Panc1 (cell line): ENCODE measurements at regions of chr1 and their contacts with region 1.

Region 1: DNA sequence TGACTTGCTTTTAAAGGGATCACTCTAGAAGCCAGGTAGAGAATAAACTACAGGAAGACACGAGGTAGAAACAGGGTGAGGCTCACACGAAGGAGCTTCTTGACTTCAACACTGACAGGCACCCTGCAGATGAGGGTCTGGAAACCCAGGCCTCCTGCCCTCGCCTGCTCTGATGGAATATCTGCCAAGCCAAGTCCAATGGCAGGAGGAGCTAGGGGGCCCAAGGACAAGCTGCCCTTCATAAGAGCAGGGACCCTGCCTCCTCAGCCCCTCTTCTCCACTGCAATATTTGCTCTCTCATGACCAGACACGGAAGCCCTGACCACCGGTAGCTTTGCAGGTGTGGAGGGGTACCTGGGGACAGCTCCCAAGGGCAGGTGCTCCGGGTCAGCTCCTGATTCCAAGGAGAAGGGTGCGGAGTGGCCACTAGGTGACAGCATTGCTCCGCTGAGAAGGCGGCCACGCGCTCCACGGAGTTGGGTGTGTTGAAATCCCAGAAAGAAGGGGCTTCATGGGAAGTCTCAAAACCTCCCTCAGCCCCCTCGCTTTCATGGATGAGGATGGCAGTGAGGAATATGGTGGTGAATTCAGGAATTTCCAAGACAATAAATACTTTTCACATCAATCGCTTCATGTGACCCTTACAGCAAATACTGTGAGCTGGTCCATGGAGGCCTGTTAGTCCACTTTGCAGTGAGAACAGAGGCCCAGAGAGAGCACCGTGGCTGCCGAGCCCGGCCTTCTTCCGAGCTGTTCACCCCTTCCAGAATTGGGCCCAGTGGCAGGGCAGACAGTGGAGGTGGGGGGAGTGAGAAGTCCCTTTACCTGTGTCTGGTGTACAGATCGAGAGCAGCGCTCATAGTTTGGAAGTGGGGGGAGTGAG is 33.2 kb upstream of the PAX7 start:
- DNase-seq: no peak
- ATAC-seq: peak; percentile 94
- H3K4me3 ChIP-seq: no peak overlapping the region
- H3K27ac ChIP-seq: no peak overlapping the region
- H3K4me1 ChIP-seq: no peaks in the 10 kb centered on the region
- H3K27me3 ChIP-seq: peaks cover 10% of the 10 kb centered on the region
- CTCF ChIP-seq: peak; percentile 98

Region 2: DNA sequence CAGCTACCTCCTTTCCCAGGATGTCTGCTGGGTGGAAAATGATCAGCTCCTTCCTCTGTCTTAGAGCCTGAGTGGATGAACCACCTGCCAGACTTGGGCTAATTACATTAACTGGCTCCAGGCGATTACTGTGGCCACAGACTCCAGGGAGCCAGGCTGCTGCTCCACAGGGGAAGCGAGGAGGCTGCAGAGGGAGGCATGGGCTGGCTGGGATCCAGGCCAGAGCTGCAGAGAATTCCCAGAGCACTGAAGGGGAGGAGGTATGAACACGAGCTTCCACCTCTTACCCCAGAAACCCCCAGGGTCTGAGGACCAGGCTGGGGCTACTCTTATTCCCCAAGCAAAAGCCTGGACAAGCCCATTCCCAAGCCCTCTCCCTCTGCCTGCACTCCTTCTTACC is 252.6 kb before region 1 on chr1:
- CTCF ChIA-PET with region 1: no interaction called
- POLR2A ChIA-PET with region 1: no interaction called
- in situ Hi-C with region 1: no loop called
- intact Hi-C with region 1: no loop called
- DNase-seq: no peak
- ATAC-seq: peak; percentile 51; the same call in 1 of the 2 replicates
- H3K4me3 ChIP-seq: no peak overlapping the region
- H3K27ac ChIP-seq: no peak overlapping the region
- H3K4me1 ChIP-seq: no peaks in the 10 kb centered on the region
- H3K27me3 ChIP-seq: peaks cover 2% of the 10 kb centered on the region; the same call in 1 of the 2 replicates
- CTCF ChIP-seq: no peak

Region 3: GRCh38 chr1:18681423-18681835 is 84.0 kb after region 1 on chr1:
- CTCF ChIA-PET with region 1: interaction called, 9 read pairs
- POLR2A ChIA-PET with region 1: no interaction called
- in situ Hi-C with region 1: no loop called
- intact Hi-C with region 1: loop called (anchors 2 kb)
- DNase-seq: peak; percentile 41
- ATAC-seq: peak; percentile 93
- H3K4me3 ChIP-seq: no peak overlapping the region
- H3K27ac ChIP-seq: no peak overlapping the region
- H3K4me1 ChIP-seq: no peaks in the 10 kb centered on the region
- H3K27me3 ChIP-seq: no peaks in the 10 kb centered on the region
- CTCF ChIP-seq: peak; percentile 83

Region 4: GRCh38 chr1:18820791-18821641 is 223.6 kb after region 1 on chr1:
- CTCF ChIA-PET with region 1: interaction called, 10 read pairs
- POLR2A ChIA-PET with region 1: no interaction called
- in situ Hi-C with region 1: no loop called
- intact Hi-C with region 1: loop called (anchors 1 kb)
- DNase-seq: peak; percentile 61
- ATAC-seq: peak; percentile 92
- H3K4me3 ChIP-seq: no peak overlapping the region
- H3K27ac ChIP-seq: no peak overlapping the region
- H3K4me1 ChIP-seq: no peaks in the 10 kb centered on the region
- H3K27me3 ChIP-seq: no peaks in the 10 kb centered on the region
- CTCF ChIP-seq: peak; percentile 96

Region 5: DNA sequence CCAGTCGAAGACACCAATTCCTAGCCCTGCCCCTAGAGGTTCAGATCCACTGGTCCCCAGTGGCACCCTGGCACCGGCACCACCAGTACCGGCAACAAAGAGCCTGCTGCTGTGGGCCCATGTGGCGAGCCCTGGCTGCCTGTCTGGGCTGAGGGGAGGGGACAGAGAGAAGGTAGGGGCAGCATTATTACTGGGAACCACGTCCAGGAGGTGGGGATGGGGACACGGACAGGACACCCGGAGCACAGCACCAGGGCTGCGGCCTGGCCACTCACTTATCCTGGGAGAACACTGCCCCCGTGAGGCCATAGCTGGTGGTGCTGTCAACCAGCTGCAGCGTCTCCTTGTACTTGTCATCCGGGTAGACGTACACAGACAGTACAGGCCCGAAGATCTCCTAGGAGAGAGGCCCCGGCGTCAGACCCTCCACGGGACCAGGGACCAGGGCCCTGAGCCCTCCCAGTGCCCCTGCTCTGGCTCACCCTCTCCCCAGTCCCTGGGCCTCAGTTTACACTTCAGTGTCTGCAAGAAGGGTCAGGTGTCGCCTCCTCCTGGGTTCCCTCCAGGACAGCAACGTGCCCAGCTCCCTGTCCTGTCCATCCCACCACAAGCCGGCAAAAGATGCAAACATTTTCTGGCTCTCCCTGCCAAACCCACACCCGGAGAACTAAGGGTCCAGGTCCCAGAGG is 277.9 kb after region 1 on chr1:
- CTCF ChIA-PET with region 1: interaction called, 6 read pairs
- POLR2A ChIA-PET with region 1: no interaction called
- in situ Hi-C with region 1: no loop called
- intact Hi-C with region 1: loop called (anchors 5 kb)
- DNase-seq: peak; percentile 53
- ATAC-seq: peak; percentile 94
- H3K4me3 ChIP-seq: no peak overlapping the region
- H3K27ac ChIP-seq: no peak overlapping the region
- H3K4me1 ChIP-seq: no peaks in the 10 kb centered on the region
- H3K27me3 ChIP-seq: no peaks in the 10 kb centered on the region
- CTCF ChIP-seq: peak; percentile 93